Transverse colon (tissue), 4 donors: ENCODE measurements at regions of chr19 and their contacts with region 1.

Region 1: GRCh38 chr19:12983542-12984142 is 11.6 kb upstream of the NFIX start:
- DNase-seq: peak; percentile 85
- H3K4me3 ChIP-seq: peak overlapping the region in 2 of 4 donors; percentile 15 to 39
- H3K27ac ChIP-seq: no peak overlapping the region
- H3K4me1 ChIP-seq: peaks cover 5 to 21% (median 18%) of the 10 kb centered on the region in 4 donors
- H3K27me3 ChIP-seq: no peaks in the 10 kb centered on the region
- CTCF ChIP-seq: peak; percentile 94 to 99 (median 96)
- EP300 ChIP-seq: no peak
- POLR2A ChIP-seq: no peak

Region 2: GRCh38 chr19:12580163-12580694 is 403.4 kb before region 1 on chr19:
- in situ Hi-C with region 1: no loop called
- intact Hi-C with region 1: no loop called
- DNase-seq: no peak
- H3K4me3 ChIP-seq: no peak overlapping the region
- H3K27ac ChIP-seq: no peak overlapping the region
- H3K4me1 ChIP-seq: no peaks in the 10 kb centered on the region
- H3K27me3 ChIP-seq: no peaks in the 10 kb centered on the region
- CTCF ChIP-seq: no peak
- EP300 ChIP-seq: no peak
- POLR2A ChIP-seq: no peak

Region 3: GRCh38 chr19:13033819-13034611 is 50.4 kb after region 1 on chr19:
- in situ Hi-C with region 1: loop called in 2 of 4 experiments (anchors 10 kb)
- intact Hi-C with region 1: no loop called
- DNase-seq: peak; percentile 88
- H3K4me3 ChIP-seq: no peak overlapping the region
- H3K27ac ChIP-seq: peak overlapping the region; percentile 79 to 87 (median 80)
- H3K4me1 ChIP-seq: peaks cover 68 to 99% (median 79%) of the 10 kb centered on the region in 4 donors
- H3K27me3 ChIP-seq: no peaks in the 10 kb centered on the region
- CTCF ChIP-seq: peak; percentile 76 to 95 (median 84)
- EP300 ChIP-seq: peak; percentile 29
- POLR2A ChIP-seq: peak; percentile 52

Region 4: GRCh38 chr19:13082192-13083007 is 98.8 kb after region 1 on chr19:
- in situ Hi-C with region 1: loop called in 3 of 4 experiments (anchors 10 to 25 kb)
- intact Hi-C with region 1: no loop called
- DNase-seq: no peak
- H3K4me3 ChIP-seq: no peak overlapping the region
- H3K27ac ChIP-seq: peak overlapping the region; percentile 10 to 65 (median 33)
- H3K4me1 ChIP-seq: peaks cover 34 to 41% (median 38%) of the 10 kb centered on the region in 4 donors
- H3K27me3 ChIP-seq: no peaks in the 10 kb centered on the region
- CTCF ChIP-seq: peak in 1 of 5 experiments; percentile 6
- EP300 ChIP-seq: no peak
- POLR2A ChIP-seq: no peak

Region 5: GRCh38 chr19:13381827-13382632 is 398.4 kb after region 1 on chr19:
- in situ Hi-C with region 1: no loop called
- intact Hi-C with region 1: no loop called
- DNase-seq: no peak
- H3K4me3 ChIP-seq: no peak overlapping the region
- H3K27ac ChIP-seq: no peak overlapping the region
- H3K4me1 ChIP-seq: no peaks in the 10 kb centered on the region
- H3K27me3 ChIP-seq: no peaks in the 10 kb centered on the region
- CTCF ChIP-seq: no peak
- EP300 ChIP-seq: no peak
- POLR2A ChIP-seq: no peak